Mammary epithelial cell (primary cell): ENCODE measurements at regions of chr15 and their contacts with region 1.

Region 1: DNA sequence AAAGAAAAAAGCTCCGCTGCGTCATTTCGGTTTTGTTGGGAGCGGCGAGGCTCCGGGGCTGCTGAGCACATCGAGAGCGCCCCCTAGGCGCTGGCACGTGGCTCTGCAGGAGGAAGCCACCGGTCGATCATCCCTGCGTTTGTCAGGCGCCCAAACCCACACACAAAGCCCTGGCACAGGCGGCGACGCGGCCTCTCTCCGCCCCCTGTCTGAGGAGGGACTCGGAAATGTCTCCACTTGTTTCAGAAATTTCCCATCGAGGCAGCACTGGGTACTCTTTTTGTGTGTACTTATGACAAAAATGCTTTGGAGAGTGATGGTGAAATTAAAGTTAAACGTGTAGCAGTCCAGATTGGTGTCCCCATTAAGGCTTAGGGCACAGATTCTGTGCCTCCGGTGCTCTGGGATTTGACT is 407.3 kb upstream of the ONECUT1 start:
- DNase-seq: peak; percentile 46
- H3K4me3 ChIP-seq: no peak overlapping the region
- H3K27ac ChIP-seq: no peak overlapping the region
- H3K4me1 ChIP-seq: no peaks in the 10 kb centered on the region
- H3K27me3 ChIP-seq: no peaks in the 10 kb centered on the region
- CTCF ChIP-seq: peak; percentile 60 to 95

Region 2: GRCh38 chr15:52780172-52780980 is 417.1 kb before region 1 on chr15:
- CTCF ChIA-PET with region 1: no interaction called
- dilution Hi-C with region 1: no loop called
- in situ Hi-C with region 1: loop called in 1 of 2 experiments (anchors 10 kb)
- intact Hi-C with region 1: loop called (anchors 1 kb)
- DNase-seq: peak; percentile 41
- H3K4me3 ChIP-seq: no peak overlapping the region
- H3K27ac ChIP-seq: no peak overlapping the region
- H3K4me1 ChIP-seq: no peaks in the 10 kb centered on the region
- H3K27me3 ChIP-seq: peaks cover 34% of the 10 kb centered on the region
- CTCF ChIP-seq: peak; percentile 90 to 98

Region 3: GRCh38 chr15:52967967-52968366 is 229.5 kb before region 1 on chr15:
- CTCF ChIA-PET with region 1: no interaction called
- dilution Hi-C with region 1: no loop called
- in situ Hi-C with region 1: no loop called
- intact Hi-C with region 1: no loop called
- DNase-seq: no peak
- H3K4me3 ChIP-seq: no peak overlapping the region
- H3K27ac ChIP-seq: no peak overlapping the region
- H3K4me1 ChIP-seq: no peaks in the 10 kb centered on the region
- H3K27me3 ChIP-seq: no peaks in the 10 kb centered on the region
- CTCF ChIP-seq: no peak

Region 4: GRCh38 chr15:53072025-53072471 is 125.4 kb before region 1 on chr15:
- CTCF ChIA-PET with region 1: no interaction called
- dilution Hi-C with region 1: no loop called
- in situ Hi-C with region 1: no loop called
- intact Hi-C with region 1: loop called (anchors 5 kb)
- DNase-seq: peak; percentile 95
- H3K4me3 ChIP-seq: no peak overlapping the region
- H3K27ac ChIP-seq: no peak overlapping the region
- H3K4me1 ChIP-seq: no peaks in the 10 kb centered on the region
- H3K27me3 ChIP-seq: no peaks in the 10 kb centered on the region
- CTCF ChIP-seq: no peak